SK-N-SH (cell line): ENCODE measurements at regions of chr4 and their contacts with region 1.

Region 1: DNA sequence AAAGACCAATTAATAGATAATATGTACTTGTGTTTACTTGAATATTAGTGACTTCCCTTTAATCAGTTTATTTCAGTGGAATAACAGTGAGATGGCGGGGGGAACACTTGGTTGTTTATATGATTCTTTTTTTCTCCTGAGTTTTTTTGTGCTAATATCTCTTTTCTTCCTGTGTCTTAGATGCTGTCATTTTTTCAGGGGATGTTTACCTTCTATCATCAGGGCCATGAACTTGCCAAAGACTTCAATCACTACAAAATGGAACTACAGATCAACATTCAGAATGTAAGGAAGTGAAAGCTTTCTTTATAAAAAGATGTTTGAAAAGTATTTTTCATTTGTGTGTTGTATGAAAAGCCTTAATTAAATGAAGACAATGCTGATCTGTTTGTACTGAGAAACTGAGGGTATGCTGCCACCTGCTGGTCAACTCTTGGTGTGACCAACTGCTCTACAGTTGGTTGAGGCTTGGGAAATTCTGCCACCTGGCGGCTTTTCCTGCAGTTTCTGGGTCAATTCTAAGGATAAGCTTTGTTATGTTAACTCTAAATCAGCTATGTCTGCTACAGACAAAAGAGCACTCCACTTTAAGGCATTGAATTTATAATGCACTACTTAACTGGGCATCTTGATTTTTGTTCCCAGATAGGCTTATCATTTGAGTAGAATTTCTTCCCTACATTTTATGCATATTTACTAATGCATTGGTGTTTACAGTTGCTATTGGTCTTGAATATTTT is 134.8 kb downstream of the ARHGAP10 start:
- DNase-seq: peak; percentile 72
- H3K4me3 ChIP-seq: peak overlapping the region in 1 of 2 experiments; percentile 48; a peak in 1 of 4 replicates
- H3K27ac ChIP-seq: peak overlapping the region in 1 of 2 experiments; percentile 58; a peak in 1 of 4 replicates
- H3K4me1 ChIP-seq: peaks cover 12 to 30% of the 10 kb centered on the region in 2 experiments; a peak in 2 of 4 replicates
- H3K27me3 ChIP-seq: no peaks in the 10 kb centered on the region
- CTCF ChIP-seq: peak; percentile 100
- EP300 ChIP-seq: no peak
- RAD21 ChIP-seq: peak; percentile 100

Region 2: GRCh38 chr4:147111033-147111367 is 755.7 kb before region 1 on chr4:
- CTCF ChIA-PET with region 1: interaction called, 10 read pairs
- POLR2A ChIA-PET with region 1: no interaction called
- DNase-seq: peak; percentile 29
- H3K4me3 ChIP-seq: no peak overlapping the region
- H3K27ac ChIP-seq: no peak overlapping the region
- H3K4me1 ChIP-seq: no peaks in the 10 kb centered on the region
- H3K27me3 ChIP-seq: no peaks in the 10 kb centered on the region
- CTCF ChIP-seq: peak; percentile 43
- EP300 ChIP-seq: no peak
- RAD21 ChIP-seq: peak; percentile 71

Region 3: DNA sequence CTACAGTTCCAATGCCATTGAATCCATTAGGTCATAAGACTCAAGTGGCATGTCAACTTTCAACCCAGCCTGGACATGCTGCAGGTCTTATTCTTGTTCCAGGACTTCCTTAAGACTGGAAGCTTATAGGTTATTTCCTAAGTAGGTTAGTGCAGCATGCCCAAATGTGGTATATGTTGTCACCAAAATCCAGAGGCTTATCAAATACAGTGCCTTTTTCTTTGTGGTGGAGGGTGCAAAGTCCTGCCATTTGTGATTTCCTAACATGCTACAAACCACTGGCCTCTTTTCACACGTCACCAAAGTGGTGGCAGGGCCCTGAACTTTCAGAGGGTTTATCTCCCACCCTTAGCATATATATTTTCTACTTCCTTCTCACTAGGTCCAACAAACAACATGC is 259.2 kb before region 1 on chr4:
- CTCF ChIA-PET with region 1: interaction called, 10 read pairs
- POLR2A ChIA-PET with region 1: no interaction called
- DNase-seq: no peak
- H3K4me3 ChIP-seq: no peak overlapping the region
- H3K27ac ChIP-seq: no peak overlapping the region
- H3K4me1 ChIP-seq: peaks cover 0 to 8% of the 10 kb centered on the region in 2 experiments; a peak in 2 of 4 replicates
- H3K27me3 ChIP-seq: no peaks in the 10 kb centered on the region
- CTCF ChIP-seq: no peak
- EP300 ChIP-seq: no peak
- RAD21 ChIP-seq: no peak

Region 4: DNA sequence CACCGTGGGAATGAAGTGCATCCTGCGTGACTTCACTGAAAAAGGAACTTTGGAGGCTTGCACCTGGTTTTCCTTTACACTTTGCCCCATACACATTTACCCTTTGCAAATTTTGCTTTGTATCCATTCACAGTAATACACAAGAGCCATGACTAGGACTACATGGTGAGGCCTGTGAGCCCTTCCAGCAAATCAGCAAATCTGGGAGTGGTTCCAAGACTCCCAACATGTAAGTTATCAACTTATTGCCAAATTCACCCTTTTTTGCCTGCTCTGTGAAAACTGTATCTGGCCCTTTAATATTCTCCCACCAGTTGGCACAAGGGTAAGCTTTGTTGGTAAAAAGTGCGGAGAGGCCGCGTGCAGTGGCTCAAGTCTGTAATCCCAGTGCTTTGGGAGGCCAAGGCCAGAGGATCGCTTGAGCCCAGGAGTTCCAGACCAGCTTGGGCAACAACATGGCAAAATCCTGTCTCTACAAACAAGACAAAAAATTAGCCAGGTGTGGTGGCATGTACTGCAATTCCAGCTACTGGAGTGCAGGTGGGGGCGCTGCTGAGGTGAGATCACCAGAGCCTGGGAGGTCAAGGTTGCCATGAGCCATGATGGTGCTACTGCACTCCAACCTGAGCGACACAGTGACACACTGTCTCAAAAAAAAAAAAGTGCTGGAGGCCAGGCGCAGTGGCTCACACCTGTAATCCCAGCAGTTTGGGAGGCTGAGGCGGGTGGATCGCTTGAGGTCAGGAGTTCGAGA is 187.7 kb before region 1 on chr4:
- CTCF ChIA-PET with region 1: interaction called, 31 read pairs
- POLR2A ChIA-PET with region 1: interaction called, 5 read pairs
- DNase-seq: no peak
- H3K4me3 ChIP-seq: no peak overlapping the region
- H3K27ac ChIP-seq: no peak overlapping the region
- H3K4me1 ChIP-seq: peaks cover 3 to 5% of the 10 kb centered on the region in 2 experiments; a peak in 3 of 4 replicates
- H3K27me3 ChIP-seq: no peaks in the 10 kb centered on the region
- CTCF ChIP-seq: no peak
- EP300 ChIP-seq: no peak
- RAD21 ChIP-seq: no peak

Region 5: DNA sequence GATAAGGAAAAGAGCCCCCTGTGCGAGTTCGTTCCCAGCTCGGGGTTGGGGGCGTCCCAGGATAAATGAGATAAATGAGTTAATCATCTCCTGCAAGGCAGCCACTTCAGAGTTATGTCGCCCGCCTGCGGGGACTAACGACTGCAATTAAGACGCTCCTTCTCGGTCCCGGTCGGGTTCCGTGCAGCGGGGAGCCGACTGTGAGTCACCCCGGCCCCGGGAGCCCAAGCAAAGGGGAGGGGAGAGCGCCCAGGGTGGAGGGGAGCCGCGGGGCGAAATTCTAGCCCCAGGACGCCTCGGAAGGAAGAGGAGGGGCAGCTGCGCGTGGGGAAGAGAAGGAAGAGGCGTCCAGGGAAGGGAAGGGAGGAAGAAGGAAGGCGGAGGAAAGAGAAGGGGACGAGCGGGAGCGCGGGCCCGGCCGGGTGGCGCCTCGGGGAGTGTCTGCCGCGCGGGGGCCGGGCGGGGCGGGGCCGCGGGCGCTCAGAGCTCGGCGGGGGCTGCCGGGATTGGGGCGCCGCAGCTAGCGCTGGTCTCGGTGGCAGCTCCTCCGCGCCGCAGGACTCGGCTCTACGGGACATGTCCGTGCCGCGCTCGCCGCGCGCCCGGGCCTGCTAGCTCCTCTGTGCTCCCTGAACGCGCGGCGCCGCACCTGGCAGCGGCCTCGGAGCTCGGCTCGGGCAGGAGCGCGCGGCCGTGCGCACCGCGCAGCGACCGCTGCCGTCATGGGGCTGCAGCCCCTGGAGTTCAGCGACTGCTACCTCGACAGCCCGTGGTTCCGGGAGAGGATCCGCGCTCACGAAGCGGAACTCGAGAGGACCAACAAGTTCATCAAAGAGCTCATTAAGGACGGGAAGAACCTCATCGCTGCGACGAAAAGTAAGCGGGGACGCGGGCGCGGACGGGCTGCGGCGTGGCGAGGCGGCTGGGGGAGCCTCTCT is 134.9 kb before region 1 on chr4 and contains the start of gene ARHGAP10:
- CTCF ChIA-PET with region 1: interaction called, 67 read pairs
- POLR2A ChIA-PET with region 1: interaction called, 11 read pairs
- DNase-seq: peak; percentile 85
- H3K4me3 ChIP-seq: peak within 1 kb of the TSS; percentile 92 to 94
- H3K27ac ChIP-seq: peak within 1 kb of the TSS; percentile 77 to 91
- H3K4me1 ChIP-seq: peaks cover 25 to 29% of the 10 kb centered on the region in 2 experiments; a peak in 3 of 4 replicates
- H3K27me3 ChIP-seq: no peaks in the 10 kb centered on the region
- CTCF ChIP-seq: no peak
- EP300 ChIP-seq: no peak; a peak in 1 of 4 replicates
- RAD21 ChIP-seq: no peak
- polyA plus RNA-seq, gene ARHGAP10: 12.0 and 15.1 TPM in 2 replicates

Region 6: GRCh38 chr4:147809211-147809610 is 57.5 kb before region 1 on chr4:
- CTCF ChIA-PET with region 1: interaction called, 14 read pairs
- POLR2A ChIA-PET with region 1: no interaction called
- DNase-seq: no peak
- H3K4me3 ChIP-seq: no peak overlapping the region
- H3K27ac ChIP-seq: no peak overlapping the region
- H3K4me1 ChIP-seq: peaks cover 0 to 11% of the 10 kb centered on the region in 2 experiments; a peak in 1 of 4 replicates
- H3K27me3 ChIP-seq: no peaks in the 10 kb centered on the region
- CTCF ChIP-seq: no peak
- EP300 ChIP-seq: no peak
- RAD21 ChIP-seq: no peak

Region 7: GRCh38 chr4:147891476-147892115 is 24.9 kb after region 1 on chr4:
- CTCF ChIA-PET with region 1: interaction called, 18 read pairs
- POLR2A ChIA-PET with region 1: no interaction called
- DNase-seq: no peak
- H3K4me3 ChIP-seq: no peak overlapping the region
- H3K27ac ChIP-seq: no peak overlapping the region
- H3K4me1 ChIP-seq: no peaks in the 10 kb centered on the region
- H3K27me3 ChIP-seq: no peaks in the 10 kb centered on the region
- CTCF ChIP-seq: no peak
- EP300 ChIP-seq: no peak
- RAD21 ChIP-seq: no peak